ENCODE measurements at regions of chr3 and their contacts with region 1.

Region 1: DNA sequence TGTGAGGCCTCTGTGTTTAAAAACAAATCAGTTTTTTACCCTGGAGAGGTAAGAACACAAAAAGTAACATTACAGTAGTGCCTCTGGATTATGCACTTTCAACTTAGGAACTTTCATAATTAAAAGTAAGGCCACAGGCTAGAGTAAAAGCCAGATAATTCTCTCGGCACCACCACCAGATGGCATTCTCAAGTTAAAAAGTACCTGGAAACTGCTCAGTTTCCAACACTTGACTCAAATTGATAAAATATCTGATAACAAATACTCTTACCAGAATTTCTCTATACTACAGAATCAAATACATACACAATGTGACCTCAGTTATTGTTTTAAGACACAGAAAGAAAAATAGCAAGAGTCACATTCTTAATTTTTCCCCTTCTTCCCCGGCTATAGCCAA is 19.9 kb downstream of the SPICE1 start:
- DNase-seq: no peak
- H3K4me3 Mint-ChIP-seq: no peak overlapping the region
- H3K27ac Mint-ChIP-seq: no peak overlapping the region
- H3K4me1 Mint-ChIP-seq: no peaks in the 10 kb centered on the region
- H3K27me3 Mint-ChIP-seq: no peaks in the 10 kb centered on the region

Region 2: DNA sequence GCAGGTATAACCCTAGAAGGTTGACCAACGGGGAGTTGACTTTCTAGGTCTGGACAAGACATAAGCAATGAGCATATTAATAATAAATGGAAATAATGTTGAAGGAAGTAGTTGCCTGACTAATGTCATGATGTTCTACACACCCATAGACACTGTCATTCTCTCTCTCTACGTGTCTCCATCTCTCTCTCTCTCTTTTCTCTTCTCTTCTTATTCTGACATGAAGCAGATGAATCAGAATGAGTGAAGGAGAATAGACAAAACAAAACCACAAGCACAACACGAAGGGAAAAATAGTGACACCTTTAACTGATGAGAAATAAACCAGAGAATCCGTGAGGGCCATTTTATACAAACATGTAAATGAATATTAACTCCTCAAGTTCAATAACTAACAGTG is 827.4 kb before region 1 on chr3:
- intact Hi-C with region 1: no loop called
- DNase-seq: no peak
- H3K4me3 Mint-ChIP-seq: no peak overlapping the region
- H3K27ac Mint-ChIP-seq: peak overlapping the region; percentile 51
- H3K4me1 Mint-ChIP-seq: peaks cover 40% of the 10 kb centered on the region
- H3K27me3 Mint-ChIP-seq: peaks cover 5% of the 10 kb centered on the region

Region 3: GRCh38 chr3:113531826-113532697 is 37.0 kb after region 1 on chr3 and contains the start of gene SIDT1:
- intact Hi-C with region 1: loop called (anchors 2 kb)
- DNase-seq: peak; percentile 64
- H3K4me3 Mint-ChIP-seq: peak within 1 kb of the TSS; percentile 100
- H3K27ac Mint-ChIP-seq: peak within 1 kb of the TSS; percentile 99
- H3K4me1 Mint-ChIP-seq: peaks cover 55% of the 10 kb centered on the region
- H3K27me3 Mint-ChIP-seq: peaks cover 10% of the 10 kb centered on the region
- total RNA-seq, gene SIDT1: 11.3 and 12.2 TPM in 2 replicates

Region 4: DNA sequence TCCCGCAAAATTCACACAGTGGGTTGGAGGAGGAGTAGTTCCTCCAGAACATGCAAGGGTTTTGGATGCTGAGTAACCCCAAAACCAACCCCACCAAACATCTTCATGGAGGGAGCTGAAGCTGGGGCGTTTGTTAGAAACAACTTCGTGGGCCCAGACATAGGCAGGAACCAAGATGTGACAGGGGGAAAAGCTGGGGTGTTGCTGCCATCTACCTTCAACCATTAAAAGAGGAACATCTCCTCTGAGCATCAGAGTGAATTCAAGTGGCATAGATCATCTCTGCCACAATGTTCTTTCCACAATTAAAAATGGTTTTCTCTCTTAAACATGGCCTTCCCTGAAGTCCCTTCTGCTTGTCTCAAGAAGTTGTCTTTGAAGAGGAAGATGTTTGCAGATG is 57.8 kb after region 1 on chr3:
- intact Hi-C with region 1: loop called (anchors 1 kb)
- DNase-seq: no peak
- H3K4me3 Mint-ChIP-seq: no peak overlapping the region
- H3K27ac Mint-ChIP-seq: no peak overlapping the region
- H3K4me1 Mint-ChIP-seq: no peaks in the 10 kb centered on the region
- H3K27me3 Mint-ChIP-seq: no peaks in the 10 kb centered on the region

Region 5: GRCh38 chr3:113626503-113627371 is 131.7 kb after region 1 on chr3:
- intact Hi-C with region 1: loop called (anchors 1 kb)
- DNase-seq: no peak
- H3K4me3 Mint-ChIP-seq: no peak overlapping the region
- H3K27ac Mint-ChIP-seq: no peak overlapping the region
- H3K4me1 Mint-ChIP-seq: peaks cover 6% of the 10 kb centered on the region
- H3K27me3 Mint-ChIP-seq: no peaks in the 10 kb centered on the region

Region 6: DNA sequence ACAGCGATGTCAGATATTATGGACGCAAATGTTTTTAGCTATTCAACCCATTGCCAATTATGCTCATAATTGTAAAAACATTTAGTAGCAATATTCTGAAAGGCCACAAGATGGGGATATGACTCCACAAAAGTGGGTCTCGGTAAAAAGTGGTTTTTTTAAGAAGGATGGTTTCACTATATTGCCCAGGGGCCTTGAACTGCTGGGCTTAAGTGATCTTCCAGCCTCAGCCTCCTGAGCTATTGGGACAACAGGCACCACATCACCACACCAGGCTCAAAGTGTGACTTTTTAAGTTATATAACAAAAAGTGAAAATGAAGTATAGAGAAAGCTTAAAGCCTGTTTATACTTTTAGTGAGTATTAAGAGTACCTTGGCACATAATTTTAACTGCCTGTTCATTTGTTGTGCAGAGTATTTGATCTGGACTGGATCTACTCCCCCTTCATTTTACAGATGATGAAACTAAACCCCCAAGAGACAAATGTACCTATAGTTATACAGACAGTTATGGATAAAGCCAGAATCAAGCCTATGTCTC is 241.6 kb after region 1 on chr3:
- intact Hi-C with region 1: loop called (anchors 2 kb)
- DNase-seq: peak; percentile 12
- H3K4me3 Mint-ChIP-seq: no peak overlapping the region
- H3K27ac Mint-ChIP-seq: no peak overlapping the region
- H3K4me1 Mint-ChIP-seq: peaks cover 19% of the 10 kb centered on the region
- H3K27me3 Mint-ChIP-seq: no peaks in the 10 kb centered on the region

Region 7: DNA sequence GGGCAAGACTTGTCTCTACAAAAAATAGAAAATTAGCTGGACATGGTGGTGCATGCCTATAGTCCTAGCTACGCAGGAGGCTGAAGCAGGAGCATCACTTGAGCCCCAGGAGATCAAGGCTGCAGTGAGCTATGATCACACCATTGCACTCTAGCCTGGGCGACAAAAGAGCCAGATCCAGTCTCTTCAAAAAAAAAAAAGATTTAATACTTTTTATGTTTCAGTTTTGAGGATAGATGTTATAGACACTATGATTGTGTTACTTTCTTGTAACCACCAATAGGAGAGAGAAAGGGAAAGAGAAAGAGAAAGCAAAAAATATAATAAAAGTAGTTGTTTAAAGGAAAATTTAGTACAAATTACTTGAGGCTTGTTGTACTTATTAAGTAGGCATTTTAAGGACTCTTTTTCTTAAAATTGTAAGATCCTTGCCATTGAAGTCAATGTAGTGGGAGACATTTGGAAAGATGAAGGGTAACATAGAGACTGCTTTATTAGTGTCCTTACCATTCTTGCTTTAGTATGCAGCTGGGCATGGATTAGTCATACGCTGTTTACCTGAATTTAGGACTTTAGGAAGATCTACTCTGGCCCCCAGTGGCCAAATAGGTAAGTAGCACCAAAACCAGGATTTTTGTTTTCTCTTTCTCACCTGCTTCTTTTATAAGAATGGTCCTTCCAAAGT is 417.7 kb after region 1 on chr3:
- intact Hi-C with region 1: loop called (anchors 2 kb)
- DNase-seq: peak; percentile 8
- H3K4me3 Mint-ChIP-seq: no peak overlapping the region
- H3K27ac Mint-ChIP-seq: no peak overlapping the region
- H3K4me1 Mint-ChIP-seq: peaks cover 7% of the 10 kb centered on the region
- H3K27me3 Mint-ChIP-seq: no peaks in the 10 kb centered on the region

Region 8: DNA sequence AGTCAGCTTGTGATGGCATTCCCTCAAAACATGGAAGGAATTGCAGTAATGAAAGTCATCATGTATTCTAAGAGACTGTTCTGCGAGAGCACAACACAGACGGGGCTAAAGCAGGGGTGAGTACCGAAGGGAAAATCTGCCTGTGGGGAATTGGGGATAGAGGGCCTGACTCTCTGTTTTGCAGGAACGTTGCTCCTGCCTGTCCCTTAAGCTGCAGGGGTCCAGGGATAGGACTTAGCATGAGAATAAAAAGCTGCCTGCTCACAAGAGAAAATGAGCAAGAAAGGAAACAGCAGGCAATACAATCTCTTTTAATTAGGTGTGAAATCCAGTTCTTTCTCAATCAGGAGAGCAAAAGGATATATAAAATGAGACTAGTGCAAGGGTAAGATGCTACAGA is 861.0 kb after region 1 on chr3:
- intact Hi-C with region 1: no loop called
- DNase-seq: no peak
- H3K4me3 Mint-ChIP-seq: no peak overlapping the region
- H3K27ac Mint-ChIP-seq: no peak overlapping the region
- H3K4me1 Mint-ChIP-seq: no peaks in the 10 kb centered on the region
- H3K27me3 Mint-ChIP-seq: no peaks in the 10 kb centered on the region